ENCODE measurements at regions of chr5 and their contacts with region 1.

Region 1: DNA sequence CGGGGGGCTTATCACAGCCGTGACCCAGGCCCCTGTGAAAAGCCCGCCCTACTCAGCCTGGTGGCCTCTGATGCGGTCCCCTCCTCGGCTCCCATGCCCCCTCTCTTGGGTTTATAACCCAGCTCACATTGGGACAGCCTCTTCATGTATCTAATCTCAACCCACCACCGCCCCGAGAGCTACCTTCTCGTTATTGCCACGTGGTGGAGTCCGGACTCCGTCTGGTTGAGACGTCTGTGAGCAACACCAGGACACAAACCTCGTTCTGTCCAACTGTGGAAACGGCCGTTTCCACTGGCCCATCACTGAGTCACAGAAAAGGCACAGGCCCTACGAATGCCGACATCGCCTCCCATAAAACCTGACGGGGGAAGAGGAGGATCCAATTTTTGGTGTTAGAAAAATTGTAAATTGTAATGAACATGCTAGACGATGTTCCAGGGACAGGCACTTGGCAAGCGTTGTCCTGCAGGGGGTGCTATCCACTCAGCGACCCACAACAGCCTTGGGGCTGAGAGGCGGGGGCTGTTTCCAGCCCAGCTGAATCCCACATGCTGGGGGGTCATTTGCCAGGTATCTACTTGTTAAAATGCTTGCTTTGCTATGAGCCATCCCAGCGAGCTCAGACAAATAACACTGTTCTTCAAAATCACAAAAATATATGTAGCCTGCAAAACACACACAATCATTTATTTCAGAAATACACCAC is 37.3 kb upstream of the N4BP3 start:
- DNase-seq: no peak

Region 2: DNA sequence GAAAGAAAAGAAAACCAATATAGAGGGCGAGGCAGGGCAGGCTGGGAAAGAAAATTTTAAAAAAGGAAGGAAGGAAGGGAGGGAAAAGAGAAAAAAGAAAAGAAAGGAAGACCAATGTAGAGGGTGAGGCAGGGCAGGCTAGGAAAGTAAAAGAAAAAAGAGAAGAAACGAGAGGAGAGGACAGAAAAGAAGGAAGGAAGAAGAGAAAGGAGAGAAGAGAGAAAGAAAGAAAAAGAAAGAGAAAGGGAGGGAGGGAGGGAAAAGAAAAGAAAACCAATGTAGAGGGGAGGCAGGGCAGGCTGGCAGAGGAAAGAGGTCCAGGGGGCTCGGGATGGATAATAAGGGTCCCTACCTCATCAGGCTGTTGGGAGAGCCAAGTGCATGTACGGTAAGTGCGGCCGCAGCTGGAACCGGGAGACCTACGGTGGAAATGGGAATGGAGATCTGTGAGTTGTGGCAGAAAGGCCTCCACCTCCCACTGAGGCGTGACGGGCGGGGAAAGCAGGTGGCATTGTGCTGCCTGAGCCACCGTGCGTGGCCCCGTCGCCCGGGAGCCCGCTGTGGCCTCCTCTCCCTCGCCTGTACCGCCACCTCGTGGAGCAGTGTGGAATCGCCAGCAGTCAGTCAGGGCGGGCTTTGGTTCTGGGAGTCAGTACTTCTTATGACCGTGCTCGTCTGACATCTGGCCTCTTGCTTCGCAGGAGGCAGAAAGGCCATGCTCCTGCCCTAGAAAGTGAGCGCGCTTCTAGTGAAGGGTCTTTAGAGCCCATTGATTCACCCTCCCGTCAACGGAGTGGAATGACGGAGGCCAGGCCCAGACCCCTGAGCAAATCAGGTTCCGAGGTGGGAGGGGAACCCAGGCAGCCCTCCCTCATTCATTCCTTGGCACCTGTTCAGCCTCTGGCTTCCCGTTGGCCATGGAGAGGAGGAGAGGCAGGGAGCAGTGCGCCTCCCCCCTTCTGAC is 88.1 kb after region 1 on chr5:
- intact Hi-C with region 1: loop called (anchors 5 kb)
- DNase-seq: peak; percentile 95

Region 3: DNA sequence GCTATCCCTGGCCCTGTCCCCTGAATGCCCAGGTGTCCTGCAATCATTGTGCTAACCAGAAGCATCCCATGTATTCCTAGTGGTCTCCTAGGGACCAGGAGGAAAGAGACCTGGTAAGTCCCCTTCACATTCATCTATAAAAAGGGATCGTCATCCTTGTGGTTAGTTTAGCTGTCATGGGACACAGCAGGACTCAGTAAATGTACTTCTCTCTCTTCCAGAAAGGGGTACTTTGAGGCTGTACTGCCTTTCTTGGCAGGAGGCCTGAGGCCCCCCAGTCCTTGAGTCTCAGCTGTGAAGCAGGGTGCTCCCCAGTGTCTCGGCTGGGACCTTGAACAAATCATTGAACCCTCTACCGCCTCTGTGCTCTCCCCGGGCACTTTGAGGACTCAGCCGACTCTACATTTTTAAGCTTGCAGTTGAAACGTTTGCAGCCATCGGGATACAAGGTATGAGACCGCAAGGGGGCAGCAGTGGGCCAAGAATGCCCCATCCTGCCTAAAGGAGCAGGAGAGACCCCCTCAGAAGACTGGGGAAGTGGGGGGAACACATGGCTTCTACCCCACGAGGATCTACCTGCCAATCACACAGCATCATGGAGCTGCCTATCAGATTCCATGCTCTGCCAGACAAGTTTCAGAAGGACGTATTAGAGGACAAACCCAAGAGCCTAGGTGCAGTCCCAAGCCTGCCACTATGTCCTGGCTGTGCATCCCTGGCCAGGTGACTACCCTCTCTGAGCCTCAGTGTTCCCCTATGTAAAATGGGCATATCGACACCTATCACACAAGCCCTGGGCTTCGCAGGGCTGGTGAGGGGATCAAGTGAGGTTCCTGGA is 159.0 kb after region 1 on chr5:
- intact Hi-C with region 1: no loop called
- DNase-seq: peak; percentile 91

Region 4: DNA sequence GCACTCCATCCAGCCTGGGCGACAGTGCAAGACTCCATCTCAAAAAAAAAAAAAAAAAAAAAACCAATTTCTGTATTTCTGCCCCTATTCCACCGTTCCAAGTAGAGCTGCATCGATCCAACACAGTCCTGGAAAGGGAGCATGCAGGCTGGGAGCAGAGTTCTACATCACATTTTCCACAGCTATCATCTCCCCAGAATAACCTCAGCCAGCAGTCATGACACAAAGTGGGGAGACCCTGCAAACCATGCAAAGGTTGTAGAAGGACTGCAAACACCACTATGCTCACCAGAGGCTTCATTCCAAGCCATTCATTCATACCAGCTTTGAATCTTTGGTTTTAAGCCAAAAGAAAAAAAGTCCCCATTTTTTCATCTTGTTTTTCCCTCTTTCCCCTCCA is 675.3 kb after region 1 on chr5:
- intact Hi-C with region 1: no loop called
- DNase-seq: no peak

Region 5: DNA sequence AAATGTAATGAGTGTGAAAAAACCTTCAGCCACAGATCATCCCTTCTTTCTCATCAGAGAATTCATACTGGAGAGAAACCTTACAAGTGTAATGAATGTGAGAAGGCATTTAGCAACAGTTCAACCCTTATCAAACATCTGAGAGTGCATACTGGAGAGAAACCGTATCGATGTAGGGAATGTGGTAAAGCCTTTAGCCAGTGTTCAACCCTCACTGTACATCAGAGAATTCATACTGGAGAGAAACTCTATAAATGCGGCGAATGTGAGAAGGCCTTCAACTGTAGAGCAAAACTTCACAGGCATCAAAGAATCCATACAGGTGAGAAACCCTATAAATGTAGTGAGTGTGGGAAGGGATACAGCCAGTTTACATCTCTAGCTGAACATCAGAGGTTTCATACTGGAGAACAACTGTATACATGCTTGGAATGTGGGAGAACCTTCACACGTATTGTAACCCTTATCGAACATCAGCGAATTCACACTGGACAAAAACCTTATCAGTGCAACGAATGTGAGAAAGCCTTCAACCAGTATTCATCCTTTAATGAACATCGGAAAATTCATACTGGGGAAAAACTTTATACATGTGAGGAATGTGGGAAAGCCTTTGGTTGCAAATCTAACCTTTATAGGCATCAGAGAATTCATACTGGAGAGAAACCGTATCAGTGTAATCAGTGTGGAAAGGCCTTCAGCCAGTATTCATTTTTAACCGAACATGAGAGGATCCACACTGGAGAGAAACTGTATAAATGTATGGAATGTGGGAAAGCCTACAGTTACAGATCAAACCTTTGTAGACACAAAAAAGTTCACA is 1003.4 kb after region 1 on chr5:
- intact Hi-C with region 1: no loop called
- DNase-seq: no peak

Measured in posterior vena cava (tissue), 2 donors.